Activated T-helper 2 cell treated with anti-CD3 and anti-CD28 coated beads, Interferon-gamma antibody, Interleukin-2, Interleukin-4, amounts not matched to agents 10 μg/mL and 5 μg/mL and 100 μg/mL, durations not matched to agents 14 hours and 24 hours and 36 hours (primary cell): ENCODE measurements at regions of chr10 and their contacts with region 1.

Region 1: GRCh38 chr10:87771871-87772500 is 46.0 kb downstream of the ATAD1 start:
- DNase-seq: no peak
- H3K4me3 Mint-ChIP-seq: no peak overlapping the region
- H3K27ac Mint-ChIP-seq: no peak overlapping the region
- H3K4me1 Mint-ChIP-seq: peaks cover 11% of the 10 kb centered on the region
- H3K27me3 Mint-ChIP-seq: no peaks in the 10 kb centered on the region

Region 2: DNA sequence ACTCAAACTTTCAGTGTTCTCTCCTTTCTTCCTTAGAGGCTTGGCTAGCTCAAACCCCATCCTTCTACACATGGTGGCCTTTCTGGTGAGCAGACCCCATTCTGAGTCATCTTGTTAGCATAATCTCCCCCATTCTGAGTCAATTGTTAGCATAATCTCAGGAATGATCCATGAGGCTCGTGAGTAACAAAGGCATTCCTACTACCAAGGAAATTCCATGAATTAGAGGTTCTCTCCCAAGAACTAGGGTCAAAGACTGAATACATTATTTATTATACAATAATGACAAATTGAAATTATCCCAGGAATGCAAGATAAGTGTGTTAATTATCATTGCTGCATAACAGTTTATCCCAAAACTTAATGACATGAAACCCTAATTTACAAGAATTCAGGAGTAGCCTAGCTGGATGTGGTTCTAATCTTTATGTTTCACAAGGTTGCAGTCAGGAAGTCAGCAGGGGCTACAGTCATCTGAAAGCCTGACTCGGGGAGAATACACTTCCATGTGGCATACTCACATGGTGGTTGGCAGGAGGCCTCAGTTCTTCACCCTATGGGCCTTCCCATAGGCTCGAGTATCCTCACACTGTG is 914.8 kb before region 1 on chr10:
- intact Hi-C with region 1: no loop called
- DNase-seq: no peak
- H3K4me3 Mint-ChIP-seq: no peak overlapping the region
- H3K27ac Mint-ChIP-seq: no peak overlapping the region
- H3K4me1 Mint-ChIP-seq: no peaks in the 10 kb centered on the region
- H3K27me3 Mint-ChIP-seq: peaks cover 3% of the 10 kb centered on the region

Region 3: DNA sequence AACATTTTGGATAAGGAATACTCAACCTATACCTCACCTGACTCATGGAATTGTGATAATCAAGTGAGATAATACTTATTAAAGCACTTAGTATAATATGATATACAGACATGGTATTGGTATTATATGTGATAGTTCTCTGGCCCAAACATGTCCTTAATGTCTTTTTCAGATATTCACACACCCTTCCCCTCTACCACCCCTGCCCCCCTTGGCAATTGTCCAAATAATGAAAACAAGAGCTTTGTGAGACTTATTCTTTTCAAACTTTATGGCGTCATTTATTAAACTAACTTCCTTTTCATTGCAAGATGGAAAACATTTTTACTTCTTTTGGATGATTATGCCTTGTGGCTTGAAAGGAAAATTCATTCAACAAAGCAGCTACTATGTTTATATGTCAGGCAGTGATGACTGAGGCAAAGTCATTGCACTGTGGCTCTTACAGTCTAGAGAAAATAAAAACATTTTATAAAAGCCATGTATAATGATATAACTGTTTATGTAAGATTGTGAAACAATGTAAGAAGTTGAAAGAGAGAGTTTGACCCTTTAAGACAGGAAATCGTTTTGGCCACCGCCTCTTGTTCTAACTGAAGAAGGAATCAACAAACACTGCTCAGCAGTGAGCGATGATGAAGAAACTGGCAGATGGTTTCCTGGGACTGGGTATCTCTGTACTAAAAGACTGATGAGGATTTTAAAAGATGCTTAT is 239.9 kb before region 1 on chr10:
- intact Hi-C with region 1: loop called (anchors 5 kb)
- DNase-seq: no peak
- H3K4me3 Mint-ChIP-seq: no peak overlapping the region
- H3K27ac Mint-ChIP-seq: no peak overlapping the region
- H3K4me1 Mint-ChIP-seq: peaks cover 4% of the 10 kb centered on the region
- H3K27me3 Mint-ChIP-seq: no peaks in the 10 kb centered on the region

Region 4: GRCh38 chr10:87659571-87660483 is 112.2 kb before region 1 on chr10 and contains the start of gene PAPSS2:
- intact Hi-C with region 1: loop called (anchors 1 kb)
- DNase-seq: no peak
- H3K4me3 Mint-ChIP-seq: peak within 1 kb of the TSS; percentile 74
- H3K27ac Mint-ChIP-seq: no peak within 1 kb of the TSS
- H3K4me1 Mint-ChIP-seq: peaks cover 8% of the 10 kb centered on the region
- H3K27me3 Mint-ChIP-seq: peaks cover 54% of the 10 kb centered on the region
- total RNA-seq, gene PAPSS2: 0.21 and 0.25 TPM in 2 replicates

Region 5: GRCh38 chr10:87685832-87686574 is 86.0 kb before region 1 on chr10:
- intact Hi-C with region 1: no loop called
- DNase-seq: no peak
- H3K4me3 Mint-ChIP-seq: no peak overlapping the region
- H3K27ac Mint-ChIP-seq: no peak overlapping the region
- H3K4me1 Mint-ChIP-seq: no peaks in the 10 kb centered on the region
- H3K27me3 Mint-ChIP-seq: peaks cover 15% of the 10 kb centered on the region

Region 6: DNA sequence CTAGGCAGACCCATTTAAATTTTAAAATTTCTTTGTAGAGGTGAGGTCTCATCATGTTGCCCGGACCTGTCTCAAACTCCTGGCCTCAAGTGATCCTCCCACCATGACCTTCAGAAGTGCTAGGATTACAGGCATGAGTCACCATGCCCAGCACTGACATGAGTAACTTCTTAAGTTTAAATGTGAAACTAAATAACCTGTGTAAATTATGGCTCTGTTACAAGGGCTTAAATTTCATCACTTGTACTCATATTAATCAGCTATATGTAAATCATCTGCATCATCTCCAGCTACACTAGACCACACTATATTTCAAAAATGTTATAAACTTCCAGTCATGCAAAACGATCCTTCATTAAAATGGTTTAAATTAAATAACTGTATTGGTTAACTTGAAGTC is 10.1 kb before region 1 on chr10:
- intact Hi-C with region 1: loop called (anchors 1 kb)
- DNase-seq: peak; percentile 18
- H3K4me3 Mint-ChIP-seq: no peak overlapping the region
- H3K27ac Mint-ChIP-seq: peak overlapping the region; percentile 80
- H3K4me1 Mint-ChIP-seq: peaks cover 31% of the 10 kb centered on the region
- H3K27me3 Mint-ChIP-seq: no peaks in the 10 kb centered on the region